ENCODE measurements at regions of chr5 and their contacts with region 1.

Region 1: DNA sequence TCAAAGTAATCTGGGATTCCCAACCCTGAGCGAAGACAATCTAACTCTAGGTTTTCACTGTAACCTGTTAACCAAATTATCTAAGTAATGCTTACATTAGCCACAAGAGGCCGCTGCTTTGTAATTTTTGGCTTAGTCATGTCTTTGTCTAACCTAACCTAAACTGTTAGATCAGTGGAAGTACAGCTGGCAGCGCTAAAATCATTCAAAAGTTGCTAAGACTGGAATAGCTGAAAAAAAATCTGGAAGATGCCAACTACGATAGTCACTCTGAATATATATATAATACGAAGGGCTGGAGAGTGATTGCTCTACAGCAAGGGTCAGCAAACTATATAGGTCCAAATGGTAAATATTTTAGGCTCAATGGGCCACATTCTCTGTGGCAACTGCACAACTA is 60.2 kb downstream of the FBXO38 start:
- DNase-seq: no peak
- ATAC-seq: peak; percentile 82 to 88
- H3K4me3 ChIP-seq: no peak overlapping the region
- H3K27ac ChIP-seq: no peak overlapping the region
- H3K4me1 ChIP-seq: peaks cover 4% of the 10 kb centered on the region
- H3K27me3 ChIP-seq: no peaks in the 10 kb centered on the region
- CTCF ChIP-seq: peak; percentile 75

Region 2: DNA sequence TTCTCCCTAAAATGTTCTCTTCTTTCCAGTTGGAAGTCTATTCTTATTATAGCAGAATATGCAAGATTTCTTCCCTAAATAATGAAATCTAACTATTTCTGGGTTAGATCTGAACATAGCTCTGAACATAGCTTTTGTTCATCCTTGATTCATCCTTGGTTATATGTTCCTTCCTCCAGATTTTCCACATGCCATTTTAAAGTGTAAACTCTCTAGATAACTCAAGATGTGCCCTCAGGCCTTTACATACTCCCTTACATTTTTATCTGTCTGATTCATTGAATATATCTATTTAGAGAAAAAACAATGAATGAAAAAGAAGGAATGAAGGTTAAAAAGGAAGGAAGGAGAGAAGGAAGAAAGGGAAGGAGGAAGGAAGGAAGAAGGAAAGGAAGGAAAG is 40.7 kb after region 1 on chr5:
- intact Hi-C with region 1: loop called (anchors 5 kb)
- DNase-seq: no peak
- ATAC-seq: no peak
- H3K4me3 ChIP-seq: no peak overlapping the region
- H3K27ac ChIP-seq: no peak overlapping the region
- H3K4me1 ChIP-seq: peaks cover 10% of the 10 kb centered on the region
- H3K27me3 ChIP-seq: peaks cover 6% of the 10 kb centered on the region
- CTCF ChIP-seq: no peak

Measured in lower lobe of right lung (tissue), 2 donors.